ENCODE measurements at regions of chr11 and their contacts with region 1.

Region 1: DNA sequence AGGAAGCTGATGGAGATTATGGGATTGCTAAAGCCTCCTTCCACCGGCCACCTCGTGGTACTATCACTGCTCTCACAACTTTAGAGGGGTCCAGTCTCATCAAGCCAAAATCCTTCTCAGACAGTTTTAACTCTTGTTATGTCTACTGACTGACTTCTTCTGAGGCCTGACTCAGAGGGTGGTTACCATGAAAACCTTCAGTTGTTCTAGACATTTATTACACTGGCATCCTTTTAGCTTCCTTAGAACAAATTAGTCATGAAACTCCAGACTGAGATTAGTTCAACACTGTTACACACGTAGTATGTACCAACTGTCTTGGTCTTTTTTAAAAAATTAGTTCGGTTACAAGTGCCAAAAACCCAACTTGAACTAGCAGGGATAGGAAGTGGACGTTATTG is 7.5 kb downstream of the DIXDC1 start:
- DNase-seq: no peak
- ATAC-seq: peak; percentile 76
- H3K4me3 Mint-ChIP-seq: no peak overlapping the region
- H3K27ac Mint-ChIP-seq: peak overlapping the region; percentile 69
- H3K4me1 Mint-ChIP-seq: peaks cover 27% of the 10 kb centered on the region
- H3K27me3 Mint-ChIP-seq: no peaks in the 10 kb centered on the region

Region 2: GRCh38 chr11:111932611-111932950 is 12.1 kb before region 1 on chr11:
- CTCF ChIA-PET with region 1: interaction called, 21 read pairs
- DNase-seq: no peak
- ATAC-seq: no peak
- H3K4me3 Mint-ChIP-seq: peak overlapping the region; percentile 54
- H3K27ac Mint-ChIP-seq: peak overlapping the region; percentile 64
- H3K4me1 Mint-ChIP-seq: peaks cover 32% of the 10 kb centered on the region
- H3K27me3 Mint-ChIP-seq: no peaks in the 10 kb centered on the region

Measured in activated CD8-positive, alpha-beta memory T cell treated with anti-CD3 and anti-CD28 coated beads, Interleukin-2, amount 10 ng/mL, durations not matched to agents 7 days and 5 days (primary cell).